Panc1 (cell line): ENCODE measurements at regions of chr10 and their contacts with region 1.

Region 1: GRCh38 chr10:132023092-132023811 is 41.5 kb upstream of the BNIP3 start:
- DNase-seq: peak; percentile 32
- ATAC-seq: peak; percentile 95
- H3K4me3 ChIP-seq: peak overlapping the region; percentile 49 to 77
- H3K27ac ChIP-seq: peak overlapping the region; percentile 21; the same call in 1 of the 2 replicates
- H3K4me1 ChIP-seq: peaks cover 7% of the 10 kb centered on the region; the same call in 1 of the 2 replicates
- H3K27me3 ChIP-seq: peaks cover 15% of the 10 kb centered on the region
- CTCF ChIP-seq: peak; percentile 99

Region 2: DNA sequence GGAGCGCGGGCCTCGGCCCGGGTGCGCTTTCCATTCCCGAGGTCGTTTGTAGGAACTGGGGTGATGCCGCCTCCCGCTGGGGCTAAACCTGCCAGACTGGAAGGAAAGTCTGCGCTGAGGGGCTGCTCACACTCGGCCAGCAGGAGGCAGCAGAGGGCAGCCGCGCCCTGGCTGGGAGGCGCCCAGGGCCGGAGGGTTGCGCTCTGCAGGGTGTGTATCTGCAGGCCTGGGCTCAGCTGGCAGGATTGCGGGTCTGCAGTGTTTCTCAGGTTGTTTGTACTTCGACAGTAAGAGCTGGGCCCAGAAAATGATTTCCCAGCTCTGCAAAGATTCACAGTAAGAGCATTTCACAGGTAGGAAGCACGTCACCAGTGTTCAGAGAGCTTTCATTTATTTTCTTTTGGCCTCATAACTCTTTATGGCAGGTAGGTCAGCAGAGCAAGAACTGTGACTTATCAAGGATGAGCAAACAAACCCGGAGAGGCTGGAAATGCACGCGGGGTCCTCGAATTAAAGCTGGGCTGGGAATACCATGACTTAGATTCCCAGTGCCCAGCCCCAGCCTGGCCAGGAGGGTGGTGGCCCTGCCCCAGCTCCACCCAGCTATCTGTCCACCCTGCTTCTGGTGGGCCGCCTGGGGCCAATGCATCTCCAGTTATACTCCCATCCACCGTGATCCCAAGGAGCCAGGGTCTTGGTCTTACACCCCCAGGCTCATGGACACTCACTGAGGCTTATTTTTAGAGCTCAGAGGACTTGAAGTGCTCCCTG is 137.7 kb before region 1 on chr10:
- CTCF ChIA-PET with region 1: interaction called, 11 read pairs
- POLR2A ChIA-PET with region 1: no interaction called
- in situ Hi-C with region 1: no loop called
- intact Hi-C with region 1: loop called (anchors 2 kb)
- DNase-seq: no peak
- ATAC-seq: peak; percentile 99
- H3K4me3 ChIP-seq: no peak overlapping the region
- H3K27ac ChIP-seq: no peak overlapping the region
- H3K4me1 ChIP-seq: no peaks in the 10 kb centered on the region; the same call in 1 of the 2 replicates
- H3K27me3 ChIP-seq: no peaks in the 10 kb centered on the region
- CTCF ChIP-seq: peak; percentile 100